ENCODE measurements at regions of chr19 and their contacts with region 1.

Region 1: GRCh38 chr19:35949131-35949530 is 13.0 kb downstream of the LRFN3 start:
- DNase-seq: no peak
- ATAC-seq: no peak
- H3K4me3 ChIP-seq: no peak overlapping the region
- H3K27ac ChIP-seq: no peak overlapping the region
- H3K4me1 ChIP-seq: peaks cover 8% of the 10 kb centered on the region
- H3K27me3 ChIP-seq: no peaks in the 10 kb centered on the region
- CTCF ChIP-seq: no peak
- EP300 ChIP-seq: no peak
- POLR2A ChIP-seq: no peak
- RAD21 ChIP-seq: no peak

Region 2: GRCh38 chr19:35740423-35741202 is 208.5 kb before region 1 on chr19:
- CTCF ChIA-PET with region 1: no interaction called
- POLR2A ChIA-PET with region 1: no interaction called
- RAD21 ChIA-PET with region 1: no interaction called
- SMC1A ChIA-PET with region 1: no interaction called
- in situ Hi-C with region 1: no loop called
- intact Hi-C with region 1: no loop called
- DNase-seq: peak; percentile 86
- ATAC-seq: peak; percentile 78
- H3K4me3 ChIP-seq: peak overlapping the region; percentile 83
- H3K27ac ChIP-seq: peak overlapping the region; percentile 99
- H3K4me1 ChIP-seq: peaks cover 26% of the 10 kb centered on the region
- H3K27me3 ChIP-seq: no peaks in the 10 kb centered on the region
- CTCF ChIP-seq: peak in 2 of 3 experiments; percentile 24 to 30; a peak in 4 of 6 replicates
- EP300 ChIP-seq: no peak
- POLR2A ChIP-seq: peak; percentile 84
- RAD21 ChIP-seq: peak; percentile 7; the same call in 1 of the 2 replicates

Region 3: DNA sequence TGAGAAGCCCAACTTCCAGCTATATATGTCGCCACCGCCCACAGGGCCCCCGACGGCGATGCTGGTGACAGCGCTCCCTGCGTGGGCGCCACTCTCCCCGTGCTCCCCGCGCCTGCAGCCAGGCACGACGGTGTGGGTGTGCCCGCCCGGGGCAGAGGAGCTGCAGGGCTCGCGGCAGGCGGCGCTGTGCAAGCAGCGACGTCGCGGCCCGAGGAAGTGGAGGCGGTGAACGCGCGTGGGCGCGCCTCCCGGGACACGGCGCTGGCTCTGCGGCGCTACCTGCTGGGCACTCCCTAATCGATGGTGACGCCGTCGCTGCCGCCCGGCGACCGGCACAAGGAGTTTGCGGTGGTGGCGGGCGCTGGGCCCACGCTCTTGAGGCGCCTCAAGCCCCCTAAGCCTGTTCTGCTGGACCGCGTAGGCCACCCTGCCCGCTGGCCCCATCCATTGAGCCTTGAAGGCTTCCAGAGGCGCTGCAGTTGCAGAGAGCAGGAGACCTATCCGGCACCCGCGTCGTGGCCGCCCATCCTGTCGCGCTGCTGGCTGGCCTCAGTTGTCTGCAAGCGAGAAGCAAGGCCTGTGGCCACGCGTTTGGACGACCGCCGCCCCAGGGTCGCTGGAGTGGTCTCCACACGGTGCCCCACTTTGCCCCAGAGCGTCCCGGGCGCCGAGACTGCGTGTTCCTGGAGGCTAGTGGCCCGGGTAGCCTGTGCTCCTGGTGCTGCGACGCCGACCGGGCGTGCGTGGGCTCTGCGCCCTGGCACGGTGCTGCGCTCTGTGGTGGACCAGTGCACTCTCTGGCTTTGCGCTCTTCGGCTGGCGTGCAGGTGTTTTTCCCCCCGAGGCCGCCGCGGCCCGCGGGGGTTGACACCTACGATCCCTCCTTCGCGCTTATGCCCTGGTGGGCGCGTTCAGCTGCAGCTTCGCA is 10.2 kb after region 1 on chr19:
- CTCF ChIA-PET with region 1: interaction called, 10 read pairs
- POLR2A ChIA-PET with region 1: no interaction called
- RAD21 ChIA-PET with region 1: no interaction called
- SMC1A ChIA-PET with region 1: no interaction called
- in situ Hi-C with region 1: no loop called
- intact Hi-C with region 1: no loop called
- DNase-seq: no peak
- ATAC-seq: peak; percentile 71
- H3K4me3 ChIP-seq: no peak overlapping the region
- H3K27ac ChIP-seq: no peak overlapping the region
- H3K4me1 ChIP-seq: no peaks in the 10 kb centered on the region
- H3K27me3 ChIP-seq: peaks cover 7 to 18% of the 10 kb centered on the region in 2 experiments
- CTCF ChIP-seq: peak; percentile 29 to 42 (median 32); a peak in 4 of 6 replicates
- EP300 ChIP-seq: no peak
- POLR2A ChIP-seq: no peak
- RAD21 ChIP-seq: 0 out of 2 replicates have a peak, but pooled peaks have one; percentile 1

Measured in GM12878 (cell line).